ENCODE measurements at regions of chr4 and their contacts with region 1.

Region 1: GRCh38 chr4:71430609-71431008 is 91.8 kb downstream of the SLC4A4 start:
- DNase-seq: no peak
- H3K4me3 ChIP-seq: no peak overlapping the region
- H3K27ac ChIP-seq: no peak overlapping the region
- H3K4me1 ChIP-seq: no peaks in the 10 kb centered on the region
- H3K27me3 ChIP-seq: no peaks in the 10 kb centered on the region
- CTCF ChIP-seq: no peak

Region 2: DNA sequence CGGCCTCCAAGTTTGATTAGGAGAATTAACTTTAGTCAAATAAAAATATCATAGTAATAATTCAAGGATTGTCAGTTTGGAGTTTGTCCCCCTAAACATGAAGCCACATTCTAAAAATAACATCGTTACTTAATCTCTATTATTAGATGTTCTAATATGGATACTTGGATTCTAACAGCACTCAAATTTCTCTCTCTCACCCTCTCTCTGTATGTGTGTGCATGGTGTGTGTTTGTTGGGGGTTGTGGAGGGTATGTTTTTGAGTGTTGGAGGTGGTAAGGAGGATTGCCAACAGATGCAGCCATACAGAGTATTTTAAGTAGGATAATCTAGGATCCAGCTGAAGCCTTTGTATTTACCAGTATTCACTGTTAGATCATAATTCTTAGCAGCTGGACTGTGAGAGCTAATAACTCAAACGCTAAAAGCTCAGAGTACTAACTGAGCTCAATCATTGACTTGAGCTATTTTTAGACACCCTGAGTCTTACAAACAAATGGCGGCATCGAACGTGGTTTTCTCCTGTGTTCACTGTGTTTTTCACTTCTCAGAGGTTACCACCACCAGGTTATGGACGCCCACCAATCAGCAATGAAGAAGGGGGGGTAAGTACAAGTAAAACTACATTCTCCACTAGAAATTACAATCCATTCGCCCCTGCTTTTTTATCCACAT is 793.2 kb before region 1 on chr4:
- CTCF ChIA-PET with region 1: no interaction called
- POLR2A ChIA-PET with region 1: interaction called, 17 read pairs
- intact Hi-C with region 1: no loop called
- DNase-seq: no peak
- H3K4me3 ChIP-seq: no peak overlapping the region
- H3K27ac ChIP-seq: no peak overlapping the region
- H3K4me1 ChIP-seq: peaks cover 4% of the 10 kb centered on the region
- H3K27me3 ChIP-seq: no peaks in the 10 kb centered on the region
- CTCF ChIP-seq: no peak